AG04450 (cell line): ENCODE measurements at regions of chr11 and their contacts with region 1.

Region 1: DNA sequence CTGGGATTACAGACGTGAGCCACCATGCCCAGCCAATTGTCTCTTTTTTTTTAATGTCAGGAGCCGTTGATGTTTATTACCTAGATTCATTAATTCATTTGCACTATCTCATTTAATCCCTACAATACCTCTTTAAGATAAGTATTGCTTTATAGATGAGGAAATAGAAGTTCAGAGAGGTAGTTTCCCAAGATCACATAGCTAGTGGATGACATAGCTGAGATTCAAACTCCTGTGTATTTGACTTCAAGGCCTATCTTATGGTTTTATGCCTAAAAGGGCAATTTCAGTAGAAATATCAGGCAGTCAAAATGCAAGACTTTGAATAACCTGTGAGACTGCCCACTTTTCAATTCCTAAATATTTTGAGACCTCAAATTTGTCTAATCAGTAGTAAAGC is 66.5 kb downstream of the PPME1 start:
- DNase-seq: no peak
- H3K4me3 ChIP-seq: no peak overlapping the region
- H3K27ac ChIP-seq: no peak overlapping the region
- H3K27me3 ChIP-seq: no peaks in the 10 kb centered on the region
- CTCF ChIP-seq: no peak

Region 2: DNA sequence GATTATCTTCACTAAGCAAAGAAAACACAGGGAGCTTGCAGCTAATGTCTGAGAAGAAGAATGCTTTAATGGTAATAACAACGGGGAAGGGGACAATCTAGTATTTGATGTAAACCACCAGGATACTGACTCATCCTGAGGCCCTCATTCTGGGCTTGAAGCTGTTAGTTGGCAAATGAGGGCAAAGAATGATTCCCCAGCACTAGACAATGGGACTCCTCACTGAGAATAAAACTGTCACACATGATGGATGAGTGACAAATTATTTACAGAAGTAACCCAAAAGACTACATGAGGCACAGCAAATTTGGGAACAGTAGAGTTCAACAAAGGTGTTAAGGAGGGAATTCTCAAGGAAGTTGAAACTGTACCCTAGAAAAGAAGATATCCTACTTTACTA is 715.9 kb before region 1 on chr11:
- CTCF ChIA-PET with region 1: no interaction called
- POLR2A ChIA-PET with region 1: no interaction called
- DNase-seq: no peak
- H3K4me3 ChIP-seq: no peak overlapping the region
- H3K27ac ChIP-seq: no peak overlapping the region
- H3K27me3 ChIP-seq: no peaks in the 10 kb centered on the region
- CTCF ChIP-seq: no peak

Region 3: GRCh38 chr11:74203966-74204365 is 33.6 kb before region 1 on chr11:
- CTCF ChIA-PET with region 1: no interaction called
- POLR2A ChIA-PET with region 1: interaction called, 18 read pairs
- DNase-seq: no peak
- H3K4me3 ChIP-seq: no peak overlapping the region
- H3K27ac ChIP-seq: no peak overlapping the region
- H3K27me3 ChIP-seq: no peaks in the 10 kb centered on the region
- CTCF ChIP-seq: no peak